ENCODE measurements at regions of chr13 and their contacts with region 1.

Region 1: GRCh38 chr13:35720690-35721554 is 244.4 kb upstream of the MAB21L1 start:
- DNase-seq: peak in 1 of 2 experiments; percentile 46
- H3K4me3 ChIP-seq: no peak overlapping the region
- H3K27ac ChIP-seq: no peak overlapping the region
- H3K4me1 ChIP-seq: peaks cover 11% of the 10 kb centered on the region
- H3K27me3 ChIP-seq: no peaks in the 10 kb centered on the region
- CTCF ChIP-seq: peak; percentile 99

Region 2: GRCh38 chr13:34076943-34077703 is 1643.8 kb before region 1 on chr13:
- CTCF ChIA-PET with region 1: no interaction called
- POLR2A ChIA-PET with region 1: no interaction called
- intact Hi-C with region 1: loop called (anchors 5 kb)
- DNase-seq: peak in 1 of 2 experiments; percentile 38
- H3K4me3 ChIP-seq: no peak overlapping the region
- H3K27ac ChIP-seq: no peak overlapping the region
- H3K4me1 ChIP-seq: peaks cover 9% of the 10 kb centered on the region
- H3K27me3 ChIP-seq: no peaks in the 10 kb centered on the region
- CTCF ChIP-seq: peak; percentile 85

Region 3: GRCh38 chr13:35210261-35210660 is 510.7 kb before region 1 on chr13:
- CTCF ChIA-PET with region 1: interaction called, 4 read pairs
- POLR2A ChIA-PET with region 1: no interaction called
- intact Hi-C with region 1: loop called (anchors 2 kb)
- DNase-seq: no peak
- H3K4me3 ChIP-seq: no peak overlapping the region
- H3K27ac ChIP-seq: no peak overlapping the region
- H3K4me1 ChIP-seq: no peaks in the 10 kb centered on the region
- H3K27me3 ChIP-seq: no peaks in the 10 kb centered on the region
- CTCF ChIP-seq: peak; percentile 24; the same call in 1 of the 2 replicates

Region 4: GRCh38 chr13:35293579-35294226 is 427.2 kb before region 1 on chr13:
- CTCF ChIA-PET with region 1: no interaction called
- POLR2A ChIA-PET with region 1: no interaction called
- intact Hi-C with region 1: no loop called
- DNase-seq: no peak
- H3K4me3 ChIP-seq: no peak overlapping the region
- H3K27ac ChIP-seq: no peak overlapping the region
- H3K4me1 ChIP-seq: no peaks in the 10 kb centered on the region
- H3K27me3 ChIP-seq: no peaks in the 10 kb centered on the region
- CTCF ChIP-seq: no peak

Region 5: GRCh38 chr13:35393886-35394285 is 327.0 kb before region 1 on chr13:
- CTCF ChIA-PET with region 1: no interaction called
- POLR2A ChIA-PET with region 1: no interaction called
- intact Hi-C with region 1: no loop called
- DNase-seq: no peak
- H3K4me3 ChIP-seq: no peak overlapping the region
- H3K27ac ChIP-seq: no peak overlapping the region
- H3K4me1 ChIP-seq: no peaks in the 10 kb centered on the region
- H3K27me3 ChIP-seq: no peaks in the 10 kb centered on the region
- CTCF ChIP-seq: no peak

Region 6: DNA sequence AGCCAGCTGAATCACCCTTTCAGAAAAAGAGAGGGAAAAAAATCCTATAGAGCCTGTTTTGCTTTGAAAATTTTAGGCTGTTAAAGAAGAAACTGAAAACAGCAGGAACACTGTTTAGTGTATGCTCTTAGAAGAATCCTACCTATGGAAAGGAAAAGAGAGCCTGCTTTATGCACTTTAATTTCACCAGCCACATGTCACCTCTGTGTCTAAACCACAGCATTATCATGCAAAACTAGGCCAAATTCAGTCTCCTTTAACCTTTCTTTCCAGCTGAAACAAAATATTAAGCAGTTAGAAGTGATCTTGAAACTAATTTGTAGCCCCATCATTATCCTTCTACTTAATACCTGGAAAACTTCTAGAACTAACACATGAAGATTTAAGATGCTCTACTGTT is 147.3 kb before region 1 on chr13:
- CTCF ChIA-PET with region 1: no interaction called
- POLR2A ChIA-PET with region 1: no interaction called
- intact Hi-C with region 1: no loop called
- DNase-seq: no peak
- H3K4me3 ChIP-seq: no peak overlapping the region
- H3K27ac ChIP-seq: no peak overlapping the region
- H3K4me1 ChIP-seq: no peaks in the 10 kb centered on the region
- H3K27me3 ChIP-seq: no peaks in the 10 kb centered on the region
- CTCF ChIP-seq: no peak

Region 7: GRCh38 chr13:35630551-35631275 is 90.2 kb before region 1 on chr13:
- CTCF ChIA-PET with region 1: no interaction called
- POLR2A ChIA-PET with region 1: no interaction called
- intact Hi-C with region 1: loop called (anchors 2 kb)
- DNase-seq: peak in 1 of 2 experiments; percentile 55
- H3K4me3 ChIP-seq: no peak overlapping the region
- H3K27ac ChIP-seq: no peak overlapping the region
- H3K4me1 ChIP-seq: no peaks in the 10 kb centered on the region
- H3K27me3 ChIP-seq: no peaks in the 10 kb centered on the region
- CTCF ChIP-seq: peak; percentile 85

Region 8: DNA sequence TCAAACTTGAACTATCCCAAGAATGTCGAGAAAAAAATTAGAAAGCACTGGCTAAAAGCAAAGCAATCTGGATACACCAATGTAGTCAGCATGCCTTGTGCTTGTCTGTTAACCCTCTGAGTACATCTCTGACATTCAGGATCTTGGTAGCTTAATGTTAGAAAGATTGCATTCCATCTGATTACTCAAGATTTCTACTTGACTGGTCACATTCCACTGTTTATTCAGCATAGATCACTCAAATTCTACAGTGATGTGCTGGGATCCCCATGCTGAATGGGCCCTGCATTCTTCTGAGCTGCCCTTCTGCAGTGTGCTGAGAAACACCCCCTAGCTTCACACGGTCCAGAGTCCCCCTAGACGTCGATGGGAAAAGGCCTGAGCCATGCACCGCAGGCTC is 51.0 kb after region 1 on chr13:
- CTCF ChIA-PET with region 1: no interaction called
- POLR2A ChIA-PET with region 1: interaction called, 6 read pairs
- intact Hi-C with region 1: loop called (anchors 2 kb)
- DNase-seq: peak; percentile 50 to 92
- H3K4me3 ChIP-seq: 0 out of 2 replicates have a peak overlapping the region, but pooled peaks have one; percentile 4
- H3K27ac ChIP-seq: 0 out of 2 replicates have a peak overlapping the region, but pooled peaks have one; percentile 3
- H3K4me1 ChIP-seq: peaks cover 21% of the 10 kb centered on the region
- H3K27me3 ChIP-seq: no peaks in the 10 kb centered on the region
- CTCF ChIP-seq: no peak

Region 9: DNA sequence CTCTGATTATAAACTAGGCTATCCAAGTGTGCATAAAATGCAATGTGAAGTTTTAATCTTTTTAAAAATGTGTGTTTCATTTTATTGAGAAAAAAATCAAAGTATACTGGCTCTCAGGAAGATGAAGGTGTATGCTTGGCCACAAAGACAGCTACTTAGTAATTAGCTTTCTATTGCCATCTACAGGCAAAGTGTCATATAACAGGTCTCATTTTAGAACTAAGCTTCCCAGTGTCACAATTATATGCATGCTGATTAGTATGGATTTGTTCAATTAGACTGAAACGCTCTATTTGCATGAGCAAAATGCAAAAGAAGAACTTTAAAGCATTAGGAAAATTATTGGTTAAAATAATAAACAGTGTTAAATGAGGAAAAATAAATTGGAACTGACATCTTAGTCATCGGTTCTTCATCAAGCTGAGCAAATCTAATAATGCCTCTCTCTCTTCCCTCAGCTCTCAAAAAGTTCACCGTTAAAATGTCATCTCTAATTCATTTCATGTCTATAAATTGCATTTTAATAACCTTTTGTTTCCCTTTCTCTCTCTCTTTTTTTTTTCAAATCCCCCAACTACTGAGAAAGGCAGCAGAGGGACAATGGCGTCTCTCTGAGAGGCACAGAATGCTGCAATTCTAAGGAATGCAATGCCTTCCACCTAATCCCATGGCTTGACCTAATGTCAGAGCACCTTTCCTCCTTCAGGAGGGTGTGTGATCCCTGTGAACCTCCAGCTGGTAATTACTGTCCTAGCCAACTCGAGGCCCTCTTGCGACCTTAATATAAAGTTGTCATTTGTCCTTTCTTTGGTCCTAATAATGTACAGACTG is 68.6 kb after region 1 on chr13:
- CTCF ChIA-PET with region 1: no interaction called
- POLR2A ChIA-PET with region 1: no interaction called
- intact Hi-C with region 1: loop called (anchors 5 kb)
- DNase-seq: no peak
- H3K4me3 ChIP-seq: no peak overlapping the region
- H3K27ac ChIP-seq: no peak overlapping the region
- H3K4me1 ChIP-seq: peaks cover 13% of the 10 kb centered on the region
- H3K27me3 ChIP-seq: no peaks in the 10 kb centered on the region
- CTCF ChIP-seq: peak; percentile 77

Measured in PC-9 (cell line).